ENCODE measurements at regions of chr14 and their contacts with region 1.

Region 1: GRCh38 chr14:36181417-36181816 is 4.9 kb upstream of the PTCSC3 start:
- DNase-seq: no peak

Region 2: GRCh38 chr14:36161776-36162175 is 19.6 kb before region 1 on chr14:
- intact Hi-C with region 1: loop called in 1 of 2 experiments (anchors 1 kb)
- DNase-seq: peak; percentile 66